K562 (cell line): ENCODE measurements at regions of chr17 and their contacts with region 1.

Region 1: GRCh38 chr17:40113110-40113906 is 8.5 kb upstream of the MSL1 start:
- DNase-seq: peak; percentile 84 to 97 (median 90)
- ATAC-seq: peak; percentile 85
- H3K4me3 ChIP-seq: peak overlapping the region; percentile 17
- H3K27ac ChIP-seq: peak overlapping the region; percentile 90
- H3K4me1 ChIP-seq: peaks cover 47 to 70% of the 10 kb centered on the region in 2 experiments
- H3K27me3 ChIP-seq: no peaks in the 10 kb centered on the region
- CTCF ChIP-seq: peak; percentile 86 to 94 (median 93)
- EP300 ChIP-seq: peak; percentile 41; the same call in 1 of the 2 replicates
- POLR2A ChIP-seq: peak; percentile 73
- RAD21 ChIP-seq: peak; percentile 82 to 89

Region 2: DNA sequence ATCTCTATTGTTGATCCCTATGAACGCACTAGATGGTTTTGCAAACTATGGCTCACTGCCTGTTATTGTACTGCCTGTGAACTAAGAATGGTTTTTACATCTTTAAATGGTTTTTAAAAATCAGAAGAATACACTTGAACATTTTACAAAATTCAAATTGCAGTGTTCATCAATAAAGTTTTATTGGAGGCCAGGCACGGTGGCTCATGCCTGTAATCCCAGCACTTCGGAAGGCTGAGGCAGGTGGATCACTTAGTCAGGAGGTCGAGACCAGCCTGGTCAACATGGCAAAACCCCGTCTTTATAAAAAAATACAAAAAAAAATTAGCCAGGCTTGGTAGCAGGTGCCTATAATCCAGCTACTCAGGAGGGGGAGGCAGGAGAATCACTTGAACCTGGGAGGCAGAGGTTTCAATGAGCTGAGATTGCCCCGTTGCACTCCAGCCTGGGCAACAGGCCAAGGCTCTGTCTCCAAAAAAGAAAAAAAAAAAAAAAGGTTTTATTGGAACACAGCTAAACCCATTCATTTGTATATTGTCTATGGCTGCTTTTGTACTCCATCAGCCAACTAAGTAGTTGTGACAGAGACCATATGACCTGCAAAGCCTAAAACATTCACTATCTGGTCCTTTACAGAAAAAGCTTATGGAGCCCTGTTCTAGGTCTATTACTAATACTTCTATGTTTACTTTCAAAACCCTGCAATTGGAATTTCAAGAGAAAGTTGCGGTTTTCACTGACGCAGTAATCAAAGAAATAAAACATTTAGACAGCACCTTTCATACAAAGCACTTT is 268.1 kb before region 1 on chr17:
- CTCF ChIA-PET with region 1: no interaction called
- POLR2A ChIA-PET with region 1: no interaction called
- in situ Hi-C with region 1: no loop called
- intact Hi-C with region 1: no loop called
- DNase-seq: no peak
- ATAC-seq: no peak
- H3K4me3 ChIP-seq: no peak overlapping the region
- H3K27ac ChIP-seq: no peak overlapping the region
- H3K4me1 ChIP-seq: no peaks in the 10 kb centered on the region
- H3K27me3 ChIP-seq: peaks cover 8 to 17% of the 10 kb centered on the region in 2 experiments; a peak in 3 of 5 replicates
- CTCF ChIP-seq: no peak
- EP300 ChIP-seq: no peak
- POLR2A ChIP-seq: no peak
- RAD21 ChIP-seq: no peak

Region 3: DNA sequence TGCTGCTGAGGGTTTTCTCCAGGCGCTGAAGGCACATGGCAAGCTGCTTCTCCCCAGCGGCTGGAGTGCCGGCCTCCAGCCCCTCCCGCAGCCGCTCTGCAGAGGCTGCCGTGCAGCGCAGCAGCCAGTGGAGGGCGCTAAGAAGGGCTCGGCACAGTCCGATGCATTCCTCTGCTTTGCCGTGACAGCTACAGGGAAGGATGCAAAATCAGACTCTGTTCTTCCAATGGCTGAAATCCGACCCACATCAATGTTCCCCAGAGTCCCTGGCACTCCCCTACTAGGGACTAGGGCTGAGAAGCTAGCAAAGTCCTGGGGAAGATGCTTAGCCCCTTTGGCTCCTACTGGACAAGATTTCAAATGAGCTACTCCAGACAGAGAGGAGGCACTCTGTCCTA is 78.1 kb before region 1 on chr17:
- CTCF ChIA-PET with region 1: interaction called, 6 read pairs
- POLR2A ChIA-PET with region 1: interaction called, 3 read pairs
- in situ Hi-C with region 1: no loop called
- intact Hi-C with region 1: loop called (anchors 1 kb)
- DNase-seq: peak; percentile 71 to 77 (median 74)
- ATAC-seq: peak; percentile 99
- H3K4me3 ChIP-seq: no peak overlapping the region
- H3K27ac ChIP-seq: no peak overlapping the region
- H3K4me1 ChIP-seq: peaks cover 0 to 4% of the 10 kb centered on the region in 2 experiments; a peak in 1 of 5 replicates
- H3K27me3 ChIP-seq: no peaks in the 10 kb centered on the region
- CTCF ChIP-seq: peak; percentile 84 to 94 (median 93)
- EP300 ChIP-seq: no peak
- POLR2A ChIP-seq: no peak
- RAD21 ChIP-seq: peak in 1 of 2 experiments; percentile 66; a peak in 3 of 4 replicates

Region 4: GRCh38 chr17:40098846-40099618 is 14.3 kb before region 1 on chr17:
- CTCF ChIA-PET with region 1: interaction called, 3 read pairs
- POLR2A ChIA-PET with region 1: interaction called, 66 read pairs
- in situ Hi-C with region 1: no loop called
- intact Hi-C with region 1: no loop called
- DNase-seq: peak; percentile 97 to 100 (median 98)
- ATAC-seq: peak; percentile 90
- H3K4me3 ChIP-seq: peak overlapping the region; percentile 53
- H3K27ac ChIP-seq: peak overlapping the region; percentile 100
- H3K4me1 ChIP-seq: peaks cover 45 to 51% of the 10 kb centered on the region in 2 experiments
- H3K27me3 ChIP-seq: no peaks in the 10 kb centered on the region
- CTCF ChIP-seq: no peak
- EP300 ChIP-seq: peak; percentile 68
- POLR2A ChIP-seq: no peak; the same call in none of the 2 replicates
- RAD21 ChIP-seq: no peak

Region 5: GRCh38 chr17:40168262-40168832 is 55.0 kb after region 1 on chr17:
- CTCF ChIA-PET with region 1: interaction called, 15 read pairs
- POLR2A ChIA-PET with region 1: interaction called, 4 read pairs
- in situ Hi-C with region 1: no loop called
- intact Hi-C with region 1: loop called (anchors 1 kb)
- DNase-seq: peak; percentile 41 to 57 (median 48)
- ATAC-seq: peak; percentile 79
- H3K4me3 ChIP-seq: no peak overlapping the region
- H3K27ac ChIP-seq: no peak overlapping the region
- H3K4me1 ChIP-seq: no peaks in the 10 kb centered on the region; a peak in 1 of 5 replicates
- H3K27me3 ChIP-seq: no peaks in the 10 kb centered on the region
- CTCF ChIP-seq: peak; percentile 58 to 84 (median 72); a peak in 4 of 6 replicates
- EP300 ChIP-seq: no peak
- POLR2A ChIP-seq: no peak
- RAD21 ChIP-seq: peak; percentile 68 to 85

Region 6: GRCh38 chr17:40287494-40288369 is 174.4 kb after region 1 on chr17 and contains the start of gene CDC6:
- CTCF ChIA-PET with region 1: interaction called, 11 read pairs
- POLR2A ChIA-PET with region 1: no interaction called
- in situ Hi-C with region 1: loop called (anchors 5 kb)
- intact Hi-C with region 1: loop called (anchors 5 kb)
- DNase-seq: peak; percentile 98 to 99 (median 99)
- ATAC-seq: peak; percentile 98
- H3K4me3 ChIP-seq: peak within 1 kb of the TSS; percentile 89
- H3K27ac ChIP-seq: peak within 1 kb of the TSS; percentile 95
- H3K4me1 ChIP-seq: peaks cover 0 to 7% of the 10 kb centered on the region in 2 experiments; a peak in 2 of 5 replicates
- H3K27me3 ChIP-seq: no peaks in the 10 kb centered on the region
- CTCF ChIP-seq: no peak
- EP300 ChIP-seq: peak; percentile 31; the same call in 1 of the 2 replicates
- POLR2A ChIP-seq: peak; percentile 99
- RAD21 ChIP-seq: no peak
- polyA plus RNA-seq, gene CDC6: 29.6 to 55.0 TPM